WTC11 (cell line): ENCODE measurements at regions of chr3 and their contacts with region 1.

Region 1: GRCh38 chr3:147391781-147392624 is 14.3 kb downstream of the ZIC4 start:
- DNase-seq: peak; percentile 89
- ATAC-seq: peak; percentile 57
- H3K4me3 Mint-ChIP-seq: peak overlapping the region; percentile 78
- H3K27ac Mint-ChIP-seq: peak overlapping the region; percentile 97
- H3K4me1 Mint-ChIP-seq: peaks cover 73% of the 10 kb centered on the region
- H3K27me3 Mint-ChIP-seq: peaks cover 98% of the 10 kb centered on the region
- CTCF ChIP-seq: no peak

Region 2: GRCh38 chr3:147377412-147378367 is 14.3 kb before region 1 on chr3:
- CTCF ChIA-PET with region 1: interaction called, 47 read pairs
- POLR2A ChIA-PET with region 1: interaction called, 19 read pairs
- DNase-seq: peak; percentile 76
- ATAC-seq: peak; percentile 93
- H3K4me3 Mint-ChIP-seq: peak overlapping the region; percentile 85
- H3K27ac Mint-ChIP-seq: peak overlapping the region; percentile 95
- H3K4me1 Mint-ChIP-seq: peaks cover 70% of the 10 kb centered on the region
- H3K27me3 Mint-ChIP-seq: peaks cover 97% of the 10 kb centered on the region
- CTCF ChIP-seq: no peak

Region 3: DNA sequence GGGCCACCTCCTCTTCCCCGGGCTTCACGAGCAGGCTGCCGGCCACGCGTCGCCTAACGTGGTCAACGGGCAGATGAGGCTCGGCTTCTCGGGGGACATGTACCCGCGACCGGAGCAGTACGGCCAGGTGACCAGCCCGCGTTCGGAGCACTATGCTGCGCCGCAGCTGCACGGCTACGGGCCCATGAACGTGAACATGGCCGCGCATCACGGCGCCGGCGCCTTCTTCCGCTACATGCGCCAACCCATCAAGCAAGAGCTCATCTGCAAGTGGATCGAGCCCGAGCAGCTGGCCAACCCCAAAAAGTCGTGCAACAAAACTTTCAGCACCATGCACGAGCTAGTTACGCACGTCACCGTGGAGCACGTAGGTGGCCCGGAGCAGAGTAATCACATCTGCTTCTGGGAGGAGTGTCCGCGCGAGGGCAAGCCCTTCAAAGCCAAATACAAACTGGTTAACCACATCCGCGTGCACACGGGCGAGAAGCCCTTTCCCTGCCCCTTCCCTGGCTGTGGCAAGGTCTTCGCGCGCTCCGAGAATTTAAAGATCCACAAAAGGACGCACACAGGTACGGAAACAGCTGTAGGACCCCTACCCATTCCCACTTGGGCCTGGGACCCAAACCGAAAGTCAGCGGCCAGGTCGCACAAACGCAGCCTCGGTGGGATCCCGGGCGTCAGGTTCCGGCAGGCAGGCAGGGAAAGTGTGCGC is 18.7 kb after region 1 on chr3:
- CTCF ChIA-PET with region 1: interaction called, 37 read pairs
- POLR2A ChIA-PET with region 1: interaction called, 23 read pairs
- DNase-seq: peak; percentile 44
- ATAC-seq: peak; percentile 3; the same call in 1 of the 2 replicates
- H3K4me3 Mint-ChIP-seq: peak overlapping the region; percentile 73
- H3K27ac Mint-ChIP-seq: peak overlapping the region; percentile 15; the same call in 1 of the 2 replicates
- H3K4me1 Mint-ChIP-seq: peaks cover 76% of the 10 kb centered on the region
- H3K27me3 Mint-ChIP-seq: peaks cover 99% of the 10 kb centered on the region
- CTCF ChIP-seq: no peak

Region 4: DNA sequence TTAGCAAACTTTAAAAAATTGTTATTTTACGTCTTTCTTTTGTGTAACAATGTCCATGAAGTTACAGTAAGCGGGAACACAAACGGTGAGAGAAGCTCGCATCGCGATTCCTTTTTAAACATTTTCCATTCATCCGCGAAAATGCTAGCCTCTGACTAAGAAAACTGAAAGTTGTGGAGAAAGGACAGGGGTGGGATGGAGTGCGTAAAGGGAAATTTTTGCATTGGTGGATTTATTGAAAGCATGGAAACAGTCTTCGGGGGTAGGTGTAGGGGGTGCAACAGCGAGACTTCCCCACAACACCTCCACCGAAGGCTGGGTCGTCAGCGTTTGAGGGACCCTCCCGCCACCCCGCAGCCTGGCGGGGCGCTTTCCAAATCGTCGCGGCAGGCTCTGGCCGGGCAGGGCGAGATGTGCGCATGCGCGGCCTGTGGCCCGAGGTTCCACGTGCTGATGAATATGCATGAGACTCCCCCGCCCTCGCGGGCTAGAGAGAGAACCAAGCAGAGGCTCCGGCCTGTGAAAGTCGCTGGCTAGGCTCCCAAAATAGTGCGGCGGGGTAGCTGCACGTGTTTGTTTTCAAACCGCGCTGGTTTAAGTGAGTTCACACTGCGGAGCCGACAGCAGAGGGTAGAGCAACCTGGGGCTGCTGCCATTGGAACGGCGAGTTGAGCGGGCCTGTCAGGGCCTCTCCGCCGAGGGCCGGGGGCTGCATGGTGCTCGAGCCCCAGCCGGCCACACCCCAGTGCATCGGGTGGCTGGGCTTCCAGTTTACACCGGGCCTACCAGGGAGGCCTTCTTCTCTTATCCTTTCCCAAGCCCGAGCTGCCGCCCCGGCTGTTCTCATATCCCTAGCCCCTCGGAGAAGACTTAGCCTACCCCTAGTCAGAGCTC is 27.1 kb after region 1 on chr3:
- CTCF ChIA-PET with region 1: interaction called, 17 read pairs
- POLR2A ChIA-PET with region 1: interaction called, 13 read pairs
- DNase-seq: peak; percentile 94
- ATAC-seq: peak; percentile 58
- H3K4me3 Mint-ChIP-seq: peak overlapping the region; percentile 73
- H3K27ac Mint-ChIP-seq: peak overlapping the region; percentile 72; the same call in 1 of the 2 replicates
- H3K4me1 Mint-ChIP-seq: peaks cover 91% of the 10 kb centered on the region
- H3K27me3 Mint-ChIP-seq: peaks cover 100% of the 10 kb centered on the region
- CTCF ChIP-seq: no peak

Region 5: DNA sequence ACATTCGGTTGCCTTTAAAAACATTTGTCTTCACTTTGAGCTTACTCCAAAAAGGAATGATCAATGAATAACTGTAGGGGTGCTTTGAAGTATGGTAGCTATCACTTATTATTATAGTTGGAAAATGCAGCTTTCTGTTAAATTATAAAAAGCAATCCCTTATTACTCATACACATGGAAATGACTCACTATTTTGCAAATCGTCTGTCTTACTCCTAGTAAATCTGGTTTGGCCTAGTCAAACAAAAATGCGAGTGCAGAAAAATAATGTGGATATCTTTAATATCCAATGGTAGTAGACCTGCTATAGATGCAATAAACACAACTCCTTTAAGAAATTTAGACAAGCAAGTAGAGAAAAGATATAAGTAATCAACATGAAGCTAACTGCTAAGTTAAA is 129.6 kb after region 1 on chr3:
- CTCF ChIA-PET with region 1: no interaction called
- POLR2A ChIA-PET with region 1: no interaction called
- DNase-seq: no peak
- ATAC-seq: no peak
- H3K4me3 Mint-ChIP-seq: no peak overlapping the region
- H3K27ac Mint-ChIP-seq: no peak overlapping the region
- H3K4me1 Mint-ChIP-seq: peaks cover 9% of the 10 kb centered on the region
- H3K27me3 Mint-ChIP-seq: no peaks in the 10 kb centered on the region
- CTCF ChIP-seq: no peak